Body of pancreas (tissue), 4 donors: ENCODE measurements at regions of chr7 and their contacts with region 1.

Region 1: DNA sequence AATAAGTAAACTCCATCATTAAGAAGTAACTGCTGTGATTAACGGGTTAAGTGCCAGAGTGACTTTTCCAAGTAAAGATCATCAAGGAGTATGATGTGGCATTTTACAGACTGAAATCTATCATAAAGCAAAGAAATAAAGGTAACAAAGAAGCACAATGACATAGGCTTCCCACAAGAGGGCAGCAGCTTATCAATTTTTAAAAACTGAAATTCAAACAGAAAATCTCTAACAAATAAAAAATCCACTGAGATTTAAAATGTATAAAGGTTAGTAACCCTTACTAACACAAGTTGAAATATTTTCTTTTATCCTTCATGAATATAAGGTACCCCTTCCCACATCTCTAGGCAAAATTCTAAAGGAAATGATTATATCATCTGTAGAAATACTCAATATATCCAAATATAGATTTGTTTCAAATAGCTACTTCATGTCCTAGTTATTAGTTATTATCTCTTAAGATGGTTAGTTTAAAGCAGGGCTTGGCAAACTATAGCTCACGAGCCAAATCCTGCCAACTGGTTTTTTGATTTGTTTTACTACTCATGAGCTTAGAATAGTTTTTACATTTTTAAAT is 29.2 kb downstream of the FAM3C start:
- DNase-seq: peak in 3 of 4 donors; percentile 24 to 51 (median 45)
- ATAC-seq: no peak
- H3K4me3 ChIP-seq: no peak overlapping the region
- H3K27ac ChIP-seq: no peak overlapping the region
- H3K4me1 ChIP-seq: peaks cover 14% of the 10 kb centered on the region
- H3K27me3 ChIP-seq: no peaks in the 10 kb centered on the region
- CTCF ChIP-seq: peak; percentile 53 to 86 (median 77)
- POLR2A ChIP-seq: no peak

Region 2: DNA sequence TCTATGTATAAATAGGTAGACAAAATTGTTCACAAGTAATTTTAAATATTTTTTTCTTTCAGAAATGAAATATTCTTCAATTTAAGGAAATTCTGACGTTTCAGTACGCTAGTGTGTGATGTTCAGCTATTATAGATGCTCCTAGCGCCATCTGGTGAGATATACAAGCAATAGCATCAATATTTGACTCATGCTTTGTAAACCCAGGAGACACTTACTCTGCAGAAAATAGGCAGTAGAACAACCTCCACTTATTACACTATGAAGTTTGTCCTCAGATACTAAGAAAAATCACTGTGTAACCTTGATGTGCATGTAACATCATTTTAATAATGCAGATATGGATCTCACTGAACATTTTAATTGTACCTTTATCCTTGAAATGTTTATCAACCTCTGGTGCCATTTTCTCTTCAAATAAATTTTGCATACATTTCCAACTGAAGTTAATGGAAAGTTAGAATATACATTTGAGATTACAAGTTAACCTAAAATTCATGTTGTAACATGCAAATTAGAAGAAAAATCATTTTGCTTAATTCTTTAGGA is 180.7 kb after region 1 on chr7:
- intact Hi-C with region 1: loop called (anchors 5 kb)
- DNase-seq: peak in 1 of 4 donors; percentile 19
- ATAC-seq: peak; percentile 95
- H3K4me3 ChIP-seq: no peak overlapping the region
- H3K27ac ChIP-seq: no peak overlapping the region
- H3K4me1 ChIP-seq: peaks cover 28% of the 10 kb centered on the region
- H3K27me3 ChIP-seq: no peaks in the 10 kb centered on the region
- CTCF ChIP-seq: peak in 6 of 7 experiments; percentile 59 to 87 (median 76)
- POLR2A ChIP-seq: no peak